ENCODE measurements at regions of chr5 and their contacts with region 1.

Region 1: DNA sequence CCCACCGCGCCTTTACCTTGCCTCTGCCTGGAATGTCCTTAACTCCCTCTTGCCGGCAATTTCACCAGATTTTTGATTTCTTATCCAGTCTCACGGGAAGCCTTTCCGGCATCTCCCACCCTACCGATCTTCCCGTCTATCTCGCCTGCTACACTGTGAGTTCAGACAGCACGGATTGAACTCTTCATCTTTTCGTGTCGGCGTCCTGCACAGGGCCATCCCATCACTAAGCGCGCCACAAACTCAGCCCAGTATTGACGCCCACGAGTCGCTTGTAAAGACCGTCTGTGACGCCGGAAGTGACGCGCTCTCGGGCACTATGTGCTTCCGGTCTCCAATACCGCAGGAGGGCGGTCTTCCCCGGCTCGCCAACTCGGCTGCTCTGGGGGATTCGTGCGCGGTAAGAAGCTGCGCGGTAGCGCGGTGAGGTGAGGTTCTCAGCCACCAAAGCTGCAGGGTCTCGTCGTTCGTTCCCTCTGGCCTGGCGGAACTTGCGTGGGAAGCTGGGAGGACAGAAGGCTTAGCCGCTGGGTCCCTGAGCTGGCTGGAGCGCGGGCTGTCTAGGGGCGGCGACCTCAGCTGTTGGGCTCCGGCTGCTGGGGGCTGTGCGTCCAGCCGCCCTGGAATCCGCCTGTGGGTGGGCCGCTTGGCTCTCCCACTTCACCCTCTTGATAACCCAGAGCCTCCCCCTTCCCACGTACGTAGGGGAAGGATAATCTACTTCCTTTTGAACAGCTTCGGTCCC is at the start of gene ZCCHC9:
- DNase-seq: peak; percentile 87 to 98 (median 90)
- ATAC-seq: peak; percentile 91
- H3K4me3 ChIP-seq: peak within 1 kb of the TSS; percentile 92
- H3K4me3 Mint-ChIP-seq: peak within 1 kb of the TSS; percentile 94
- H3K27ac ChIP-seq: peak within 1 kb of the TSS; percentile 84
- H3K27ac Mint-ChIP-seq: peak within 1 kb of the TSS; percentile 91
- H3K4me1 ChIP-seq: peaks cover 25% of the 10 kb centered on the region
- H3K4me1 Mint-ChIP-seq: peaks cover 60% of the 10 kb centered on the region
- H3K27me3 ChIP-seq: no peaks in the 10 kb centered on the region
- H3K27me3 Mint-ChIP-seq: no peaks in the 10 kb centered on the region
- CTCF ChIP-seq: no peak
- total RNA-seq, gene ZCCHC9: 16.3 to 17.3 TPM

Region 2: GRCh38 chr5:79346420-79346824 is 1955.0 kb before region 1 on chr5:
- CTCF ChIA-PET with region 1: no interaction called
- POLR2A ChIA-PET with region 1: no interaction called
- intact Hi-C with region 1: no loop called
- DNase-seq: no peak
- ATAC-seq: no peak
- H3K4me3 ChIP-seq: no peak overlapping the region
- H3K4me3 Mint-ChIP-seq: no peak overlapping the region
- H3K27ac ChIP-seq: no peak overlapping the region
- H3K27ac Mint-ChIP-seq: no peak overlapping the region
- H3K4me1 ChIP-seq: no peaks in the 10 kb centered on the region
- H3K4me1 Mint-ChIP-seq: no peaks in the 10 kb centered on the region
- H3K27me3 ChIP-seq: no peaks in the 10 kb centered on the region
- H3K27me3 Mint-ChIP-seq: peaks cover 7% of the 10 kb centered on the region
- CTCF ChIP-seq: no peak

Region 3: DNA sequence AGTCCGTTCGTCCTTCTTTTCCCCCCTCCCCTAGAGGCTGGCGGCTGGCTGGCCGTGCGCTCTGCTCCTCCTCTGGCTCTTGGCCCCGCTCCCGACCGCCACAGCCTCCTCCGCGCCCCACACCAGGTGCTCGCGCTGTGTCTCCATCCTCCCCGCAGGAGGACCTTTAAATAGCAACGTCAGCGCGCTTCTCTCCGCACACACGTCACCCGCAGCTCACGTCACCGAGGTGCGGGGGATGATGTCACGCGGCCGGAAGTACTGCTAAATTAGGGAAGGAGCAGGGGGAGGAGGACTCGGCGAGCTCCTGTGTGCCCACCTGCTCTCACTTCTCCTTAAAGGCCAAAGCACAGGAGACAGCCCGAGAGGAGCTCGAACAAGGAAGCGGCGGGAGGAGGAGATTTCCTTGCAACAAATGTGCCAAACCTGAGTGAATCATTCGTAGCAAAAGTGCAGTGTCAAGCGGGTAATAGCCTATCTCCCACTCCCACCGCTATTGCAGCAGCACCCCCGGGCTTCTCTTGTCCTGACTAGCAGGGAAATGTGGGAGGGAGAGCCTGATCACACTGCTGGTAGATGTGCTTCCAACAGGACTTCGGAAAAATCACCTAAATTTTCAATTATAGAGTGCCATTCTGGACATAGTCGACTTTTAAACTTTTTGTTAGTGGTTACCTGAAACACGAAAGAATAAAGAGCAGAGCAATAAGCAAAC is 1786.9 kb before region 1 on chr5:
- CTCF ChIA-PET with region 1: no interaction called
- POLR2A ChIA-PET with region 1: no interaction called
- intact Hi-C with region 1: loop called in 1 of 2 experiments (anchors 10 kb)
- DNase-seq: peak; percentile 76 to 97 (median 87)
- ATAC-seq: peak; percentile 85
- H3K4me3 ChIP-seq: peak overlapping the region; percentile 79
- H3K4me3 Mint-ChIP-seq: peak overlapping the region; percentile 98
- H3K27ac ChIP-seq: peak overlapping the region; percentile 69 to 89
- H3K27ac Mint-ChIP-seq: peak overlapping the region; percentile 96
- H3K4me1 ChIP-seq: peaks cover 19% of the 10 kb centered on the region
- H3K4me1 Mint-ChIP-seq: peaks cover 41% of the 10 kb centered on the region
- H3K27me3 ChIP-seq: peaks cover 5 to 15% of the 10 kb centered on the region in 2 experiments
- H3K27me3 Mint-ChIP-seq: peaks cover 34% of the 10 kb centered on the region
- CTCF ChIP-seq: no peak

Region 4: DNA sequence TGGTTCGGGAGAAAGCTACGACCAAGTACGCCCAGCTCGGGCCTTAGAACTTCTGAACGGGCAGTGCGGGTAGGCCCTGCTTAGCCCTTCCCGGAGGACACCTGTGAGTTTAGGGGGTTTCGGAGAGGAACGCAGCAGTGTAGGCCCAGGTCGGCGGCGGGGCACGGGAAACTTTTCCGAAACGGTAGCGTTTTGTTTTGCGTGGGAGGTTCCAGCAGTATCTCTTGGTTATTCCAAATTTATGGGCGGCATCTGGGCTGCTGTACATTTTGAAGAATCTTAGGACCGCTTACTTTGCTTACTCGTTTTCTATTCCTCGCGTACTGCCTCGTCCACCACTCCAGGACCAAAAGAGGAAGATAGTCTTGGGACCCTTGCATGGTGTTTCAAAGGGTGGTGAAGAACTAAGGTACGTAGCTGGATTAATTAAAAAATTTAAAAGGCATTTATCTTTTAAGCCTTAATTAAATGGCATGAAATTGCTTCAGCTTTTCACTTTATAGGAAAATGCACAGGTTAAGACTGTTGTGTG is 1688.7 kb before region 1 on chr5:
- CTCF ChIA-PET with region 1: no interaction called
- POLR2A ChIA-PET with region 1: no interaction called
- intact Hi-C with region 1: loop called in 1 of 2 experiments (anchors 5 kb)
- DNase-seq: no peak
- ATAC-seq: no peak
- H3K4me3 ChIP-seq: peak overlapping the region; percentile 81
- H3K4me3 Mint-ChIP-seq: peak overlapping the region; percentile 91
- H3K27ac ChIP-seq: peak overlapping the region; percentile 76 to 90
- H3K27ac Mint-ChIP-seq: peak overlapping the region; percentile 98
- H3K4me1 ChIP-seq: peaks cover 14% of the 10 kb centered on the region
- H3K4me1 Mint-ChIP-seq: peaks cover 42% of the 10 kb centered on the region
- H3K27me3 ChIP-seq: no peaks in the 10 kb centered on the region
- H3K27me3 Mint-ChIP-seq: no peaks in the 10 kb centered on the region
- CTCF ChIP-seq: no peak

Region 5: GRCh38 chr5:79999722-80000121 is 1301.7 kb before region 1 on chr5:
- CTCF ChIA-PET with region 1: no interaction called
- POLR2A ChIA-PET with region 1: no interaction called
- intact Hi-C with region 1: loop called in 1 of 2 experiments (anchors 5 kb)
- DNase-seq: no peak
- ATAC-seq: no peak
- H3K4me3 ChIP-seq: no peak overlapping the region
- H3K4me3 Mint-ChIP-seq: no peak overlapping the region
- H3K27ac ChIP-seq: no peak overlapping the region
- H3K27ac Mint-ChIP-seq: no peak overlapping the region
- H3K4me1 ChIP-seq: no peaks in the 10 kb centered on the region
- H3K4me1 Mint-ChIP-seq: no peaks in the 10 kb centered on the region
- H3K27me3 ChIP-seq: no peaks in the 10 kb centered on the region
- H3K27me3 Mint-ChIP-seq: peaks cover 9% of the 10 kb centered on the region
- CTCF ChIP-seq: no peak

Region 6: GRCh38 chr5:80686757-80687156 is 614.7 kb before region 1 on chr5:
- CTCF ChIA-PET with region 1: no interaction called
- POLR2A ChIA-PET with region 1: no interaction called
- intact Hi-C with region 1: loop called (anchors 10 kb)
- DNase-seq: peak in 3 of 14 experiments; percentile 29 to 52 (median 32)
- ATAC-seq: no peak
- H3K4me3 ChIP-seq: no peak overlapping the region
- H3K4me3 Mint-ChIP-seq: no peak overlapping the region
- H3K27ac ChIP-seq: no peak overlapping the region
- H3K27ac Mint-ChIP-seq: no peak overlapping the region
- H3K4me1 ChIP-seq: no peaks in the 10 kb centered on the region
- H3K4me1 Mint-ChIP-seq: peaks cover 22% of the 10 kb centered on the region
- H3K27me3 ChIP-seq: no peaks in the 10 kb centered on the region
- H3K27me3 Mint-ChIP-seq: no peaks in the 10 kb centered on the region
- CTCF ChIP-seq: peak; percentile 27

Region 7: GRCh38 chr5:81450940-81451339 is 149.5 kb after region 1 on chr5:
- CTCF ChIA-PET with region 1: no interaction called
- POLR2A ChIA-PET with region 1: no interaction called
- intact Hi-C with region 1: no loop called
- DNase-seq: no peak
- ATAC-seq: no peak
- H3K4me3 ChIP-seq: no peak overlapping the region
- H3K4me3 Mint-ChIP-seq: no peak overlapping the region
- H3K27ac ChIP-seq: no peak overlapping the region
- H3K27ac Mint-ChIP-seq: no peak overlapping the region
- H3K4me1 ChIP-seq: no peaks in the 10 kb centered on the region
- H3K4me1 Mint-ChIP-seq: no peaks in the 10 kb centered on the region
- H3K27me3 ChIP-seq: no peaks in the 10 kb centered on the region
- H3K27me3 Mint-ChIP-seq: no peaks in the 10 kb centered on the region
- CTCF ChIP-seq: no peak

Region 8: DNA sequence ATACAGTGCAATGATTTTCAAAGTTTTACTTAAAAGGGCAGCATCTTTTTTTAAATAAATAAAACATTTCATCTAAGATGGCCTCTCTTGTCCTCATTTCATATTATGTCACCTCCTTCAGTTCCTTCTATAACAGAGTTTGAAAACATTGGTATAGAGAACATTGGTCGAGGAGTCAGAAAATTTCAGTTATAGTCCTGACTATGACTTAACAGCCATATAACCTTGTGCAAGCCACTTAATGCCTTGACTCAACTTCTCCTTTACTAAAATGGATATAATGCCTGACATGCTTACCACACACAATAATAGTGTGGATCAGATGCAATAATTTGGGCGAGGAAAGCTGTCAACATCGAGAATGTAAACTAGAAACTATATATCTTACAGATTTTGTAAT is 426.9 kb after region 1 on chr5:
- CTCF ChIA-PET with region 1: no interaction called
- POLR2A ChIA-PET with region 1: no interaction called
- intact Hi-C with region 1: no loop called
- DNase-seq: no peak
- ATAC-seq: no peak
- H3K4me3 ChIP-seq: no peak overlapping the region
- H3K4me3 Mint-ChIP-seq: no peak overlapping the region
- H3K27ac ChIP-seq: no peak overlapping the region
- H3K27ac Mint-ChIP-seq: no peak overlapping the region
- H3K4me1 ChIP-seq: no peaks in the 10 kb centered on the region
- H3K4me1 Mint-ChIP-seq: peaks cover 74% of the 10 kb centered on the region
- H3K27me3 ChIP-seq: no peaks in the 10 kb centered on the region
- H3K27me3 Mint-ChIP-seq: no peaks in the 10 kb centered on the region
- CTCF ChIP-seq: no peak

Region 9: GRCh38 chr5:81971712-81972495 is 670.5 kb after region 1 on chr5 and contains the start of gene ATG10:
- CTCF ChIA-PET with region 1: no interaction called
- POLR2A ChIA-PET with region 1: interaction called, 3 read pairs
- intact Hi-C with region 1: loop called in 1 of 2 experiments (anchors 10 kb)
- DNase-seq: peak; percentile 60 to 94 (median 82)
- ATAC-seq: peak; percentile 82
- H3K4me3 ChIP-seq: peak within 1 kb of the TSS; percentile 90
- H3K4me3 Mint-ChIP-seq: peak within 1 kb of the TSS; percentile 98
- H3K27ac ChIP-seq: peak within 1 kb of the TSS; percentile 87 to 98
- H3K27ac Mint-ChIP-seq: peak within 1 kb of the TSS; percentile 96
- H3K4me1 ChIP-seq: peaks cover 5% of the 10 kb centered on the region
- H3K4me1 Mint-ChIP-seq: peaks cover 31% of the 10 kb centered on the region
- H3K27me3 ChIP-seq: no peaks in the 10 kb centered on the region
- H3K27me3 Mint-ChIP-seq: no peaks in the 10 kb centered on the region
- CTCF ChIP-seq: no peak
- total RNA-seq, gene ATG10: 4.7 to 5.3 TPM

Region 10: GRCh38 chr5:82278095-82278918 is 976.9 kb after region 1 on chr5 and contains the start of gene RPS23:
- CTCF ChIA-PET with region 1: no interaction called
- POLR2A ChIA-PET with region 1: interaction called, 7 read pairs
- intact Hi-C with region 1: loop called in 1 of 2 experiments (anchors 5 kb)
- DNase-seq: peak; percentile 77 to 93 (median 84)
- ATAC-seq: peak; percentile 92
- H3K4me3 ChIP-seq: peak within 1 kb of the TSS; percentile 78
- H3K4me3 Mint-ChIP-seq: peak within 1 kb of the TSS; percentile 94
- H3K27ac ChIP-seq: peak within 1 kb of the TSS; percentile 62 to 63
- H3K27ac Mint-ChIP-seq: peak within 1 kb of the TSS; percentile 94
- H3K4me1 ChIP-seq: peaks cover 18% of the 10 kb centered on the region
- H3K4me1 Mint-ChIP-seq: peaks cover 29% of the 10 kb centered on the region
- H3K27me3 ChIP-seq: no peaks in the 10 kb centered on the region
- H3K27me3 Mint-ChIP-seq: no peaks in the 10 kb centered on the region
- CTCF ChIP-seq: no peak
- total RNA-seq, gene RPS23: 4,190 to 4,212 TPM

Measured in CD4-positive, alpha-beta T cell (primary cell).